ENCODE measurements at regions of chr22 and their contacts with region 1.

Region 1: DNA sequence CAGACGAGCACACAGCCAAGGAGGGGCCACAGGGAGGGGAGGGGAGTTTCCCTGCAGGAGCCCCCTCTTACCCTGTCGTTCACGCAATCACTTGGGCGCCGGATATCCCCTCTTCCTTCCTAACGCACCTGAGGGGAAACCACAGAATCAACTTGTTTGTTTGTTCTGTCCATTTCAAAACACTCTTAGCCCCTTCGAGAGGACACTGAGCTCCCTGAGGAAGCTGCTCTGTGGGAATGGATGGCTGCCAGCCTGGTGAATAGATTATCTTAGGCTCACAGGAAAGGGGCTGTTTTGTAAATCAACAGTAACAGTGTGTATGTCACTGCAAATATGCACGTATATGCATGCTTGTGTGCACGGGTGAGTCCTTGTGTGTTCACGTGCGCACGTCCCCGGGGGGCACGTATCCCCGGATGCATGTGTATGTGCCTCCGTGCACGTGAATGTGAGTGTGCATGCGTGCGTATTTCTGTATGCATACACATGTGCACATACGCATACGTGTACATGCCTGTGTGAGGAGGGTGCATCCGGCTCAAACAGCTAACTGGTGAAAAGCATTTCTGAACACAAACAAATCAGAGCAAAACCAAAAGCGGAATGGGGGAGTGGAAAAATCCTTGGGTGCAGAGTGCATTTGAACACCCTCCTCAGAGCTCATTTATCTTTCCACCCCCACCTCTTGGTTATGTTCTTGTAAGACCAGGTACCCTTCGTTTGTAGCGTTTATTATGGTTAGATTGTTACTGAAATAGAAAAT is 7.2 kb downstream of the ARSA start:
- DNase-seq: peak; percentile 87
- ATAC-seq: peak; percentile 70
- H3K4me3 Mint-ChIP-seq: peak overlapping the region; percentile 80
- H3K27ac Mint-ChIP-seq: peak overlapping the region; percentile 97
- H3K4me1 Mint-ChIP-seq: peaks cover 40% of the 10 kb centered on the region
- H3K27me3 Mint-ChIP-seq: no peaks in the 10 kb centered on the region

Region 2: GRCh38 chr22:49852898-49853894 is 767.6 kb before region 1 on chr22 and contains the start of gene ZBED4:
- CTCF ChIA-PET with region 1: no interaction called
- POLR2A ChIA-PET with region 1: no interaction called
- intact Hi-C with region 1: loop called in 1 of 2 experiments (anchors 1 kb)
- DNase-seq: peak; percentile 99
- ATAC-seq: peak; percentile 88
- H3K4me3 Mint-ChIP-seq: peak within 1 kb of the TSS; percentile 96
- H3K27ac Mint-ChIP-seq: peak within 1 kb of the TSS; percentile 87
- H3K4me1 Mint-ChIP-seq: peaks cover 36% of the 10 kb centered on the region
- H3K27me3 Mint-ChIP-seq: peaks cover 8% of the 10 kb centered on the region
- total RNA-seq, gene ZBED4: 17.3 to 17.4 TPM

Region 3: GRCh38 chr22:50148991-50149721 is 471.6 kb before region 1 on chr22:
- CTCF ChIA-PET with region 1: no interaction called
- POLR2A ChIA-PET with region 1: no interaction called
- intact Hi-C with region 1: no loop called
- DNase-seq: peak; percentile 86
- ATAC-seq: peak; percentile 98
- H3K4me3 Mint-ChIP-seq: no peak overlapping the region
- H3K27ac Mint-ChIP-seq: no peak overlapping the region
- H3K4me1 Mint-ChIP-seq: no peaks in the 10 kb centered on the region
- H3K27me3 Mint-ChIP-seq: peaks cover 3% of the 10 kb centered on the region

Region 4: DNA sequence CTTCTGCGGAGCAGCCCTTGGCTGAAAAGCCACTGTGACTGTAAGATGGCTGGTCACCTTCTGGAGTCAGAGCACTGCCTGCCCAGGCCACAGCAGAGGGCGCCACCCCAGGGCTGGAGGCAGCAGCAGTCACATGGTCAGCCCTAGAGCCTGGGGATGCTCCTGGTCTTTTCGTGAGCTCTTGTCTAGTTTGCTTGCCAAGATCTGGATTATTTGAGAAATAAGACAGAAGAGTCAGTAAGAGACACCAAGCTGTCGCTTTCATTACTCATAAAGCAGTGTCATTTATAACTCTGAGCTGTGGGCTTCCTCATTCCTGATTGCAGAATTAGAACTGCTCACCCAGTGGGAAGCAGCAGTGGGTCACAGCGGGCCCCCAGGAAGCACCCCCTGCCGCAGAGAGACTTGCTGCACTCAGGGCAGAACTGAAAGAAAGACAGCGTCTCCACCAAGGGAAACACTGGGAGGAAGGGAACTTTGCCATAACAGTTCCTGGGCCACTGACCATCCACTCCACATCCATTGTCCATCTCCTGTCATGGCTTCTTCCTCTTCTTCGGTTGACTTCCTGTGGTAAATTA is 220.9 kb before region 1 on chr22:
- CTCF ChIA-PET with region 1: no interaction called
- POLR2A ChIA-PET with region 1: no interaction called
- intact Hi-C with region 1: loop called in 1 of 2 experiments (anchors 1 kb)
- DNase-seq: peak; percentile 69
- ATAC-seq: peak; percentile 87
- H3K4me3 Mint-ChIP-seq: no peak overlapping the region
- H3K27ac Mint-ChIP-seq: peak overlapping the region; percentile 66
- H3K4me1 Mint-ChIP-seq: peaks cover 11% of the 10 kb centered on the region
- H3K27me3 Mint-ChIP-seq: no peaks in the 10 kb centered on the region

Region 5: DNA sequence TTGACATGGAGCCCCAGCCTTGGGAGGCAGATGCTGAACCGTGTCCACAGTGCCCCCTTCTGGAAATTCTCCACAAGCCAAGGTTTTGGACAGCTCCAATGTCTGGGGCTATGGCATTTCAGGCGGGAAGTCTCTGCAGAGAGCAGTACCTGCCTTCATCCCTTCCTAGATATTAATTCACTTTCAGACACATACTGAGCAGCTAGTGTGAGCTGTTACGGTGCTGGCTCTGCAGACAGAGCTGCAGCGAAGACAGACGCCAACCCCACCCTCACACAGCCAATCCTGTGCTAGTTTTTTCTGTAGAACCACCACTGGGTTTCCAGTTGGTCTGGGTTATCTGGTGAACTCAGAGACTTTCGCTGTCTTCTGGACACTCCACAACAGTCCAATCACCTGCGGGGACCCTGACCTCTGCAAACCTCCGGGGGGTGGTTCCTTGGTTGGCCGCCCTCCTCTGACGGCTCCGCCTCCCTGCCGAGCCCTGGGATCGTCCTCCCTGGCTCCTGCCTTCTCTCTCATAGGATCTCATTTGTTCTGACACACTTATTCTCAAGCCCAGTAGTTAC is 122.4 kb before region 1 on chr22:
- CTCF ChIA-PET with region 1: interaction called, 4 read pairs
- POLR2A ChIA-PET with region 1: no interaction called
- intact Hi-C with region 1: loop called in 1 of 2 experiments (anchors 2 kb)
- DNase-seq: peak; percentile 78
- ATAC-seq: peak; percentile 96
- H3K4me3 Mint-ChIP-seq: no peak overlapping the region
- H3K27ac Mint-ChIP-seq: no peak overlapping the region
- H3K4me1 Mint-ChIP-seq: peaks cover 7% of the 10 kb centered on the region
- H3K27me3 Mint-ChIP-seq: no peaks in the 10 kb centered on the region

Region 6: GRCh38 chr22:50530877-50531545 is 89.8 kb before region 1 on chr22:
- CTCF ChIA-PET with region 1: interaction called, 27 read pairs
- POLR2A ChIA-PET with region 1: interaction called, 22 read pairs
- intact Hi-C with region 1: loop called in 1 of 2 experiments (anchors 1 kb)
- DNase-seq: peak; percentile 92
- ATAC-seq: peak; percentile 45
- H3K4me3 Mint-ChIP-seq: peak overlapping the region; percentile 87
- H3K27ac Mint-ChIP-seq: peak overlapping the region; percentile 97
- H3K4me1 Mint-ChIP-seq: peaks cover 45% of the 10 kb centered on the region
- H3K27me3 Mint-ChIP-seq: no peaks in the 10 kb centered on the region

Region 7: DNA sequence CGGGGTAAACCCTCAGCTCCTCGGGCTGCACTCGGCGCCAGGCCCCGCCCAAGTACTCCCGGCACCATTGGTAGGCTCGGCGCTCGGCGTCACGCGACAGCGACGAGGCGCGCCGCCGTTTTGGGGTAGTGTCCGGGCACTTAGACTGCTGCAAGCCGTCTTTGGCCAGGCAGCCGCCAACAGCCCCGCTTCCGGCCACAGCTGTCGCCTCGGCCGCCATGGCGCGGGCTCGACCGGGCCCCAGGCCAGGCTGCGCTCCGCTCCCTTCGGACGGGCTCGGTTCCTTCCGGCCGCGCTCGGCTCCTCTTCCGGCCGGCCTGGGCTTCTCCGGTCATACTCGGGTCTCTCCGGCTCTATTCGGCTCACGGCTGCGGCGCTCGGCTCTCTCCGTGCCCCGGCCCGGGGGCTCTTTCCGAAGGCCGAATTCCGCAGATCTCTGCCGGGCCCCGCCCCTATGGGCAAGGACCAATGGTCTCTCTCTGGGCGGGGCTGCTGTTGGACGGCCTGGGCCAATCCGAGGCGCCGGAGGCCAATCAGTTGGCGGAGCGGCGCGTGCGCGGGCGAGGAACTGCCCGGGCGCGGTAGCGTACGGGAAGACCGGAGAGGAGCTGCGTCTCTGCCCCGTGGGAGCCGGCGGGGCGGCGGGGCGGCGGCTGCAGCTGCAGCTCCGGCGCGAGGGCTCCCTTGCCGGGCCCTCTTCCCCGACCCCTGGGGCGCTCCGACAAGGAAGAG is 38.0 kb before region 1 on chr22 and contains the start of gene CHKB:
- CTCF ChIA-PET with region 1: interaction called, 4 read pairs
- POLR2A ChIA-PET with region 1: interaction called, 6 read pairs
- intact Hi-C with region 1: loop called (anchors 1 kb)
- DNase-seq: peak; percentile 99
- ATAC-seq: peak; percentile 97
- H3K4me3 Mint-ChIP-seq: peak within 1 kb of the TSS; percentile 86
- H3K27ac Mint-ChIP-seq: peak within 1 kb of the TSS; percentile 84
- H3K4me1 Mint-ChIP-seq: peaks cover 25% of the 10 kb centered on the region
- H3K27me3 Mint-ChIP-seq: no peaks in the 10 kb centered on the region
- total RNA-seq, gene CHKB: 68.2 to 79.7 TPM

Measured in activated CD4-positive, alpha-beta T cell treated with anti-CD3 and anti-CD28 coated beads for 36 hours (primary cell).